ENCODE measurements at regions of chr2 and their contacts with region 1.

Region 1: GRCh38 chr2:207008105-207008990 is 69.0 kb downstream of the CPO start:
- DNase-seq: no peak
- ATAC-seq: no peak
- H3K4me3 ChIP-seq: no peak overlapping the region
- H3K27ac ChIP-seq: no peak overlapping the region
- H3K4me1 ChIP-seq: no peaks in the 10 kb centered on the region
- H3K27me3 ChIP-seq: no peaks in the 10 kb centered on the region
- CTCF ChIP-seq: peak; percentile 21; the same call in 1 of the 2 replicates

Region 2: GRCh38 chr2:207037896-207038295 is 29.5 kb after region 1 on chr2:
- CTCF ChIA-PET with region 1: interaction called, 13 read pairs
- POLR2A ChIA-PET with region 1: no interaction called
- in situ Hi-C with region 1: no loop called
- intact Hi-C with region 1: no loop called
- DNase-seq: no peak
- ATAC-seq: no peak
- H3K4me3 ChIP-seq: no peak overlapping the region
- H3K27ac ChIP-seq: no peak overlapping the region
- H3K4me1 ChIP-seq: no peaks in the 10 kb centered on the region
- H3K27me3 ChIP-seq: no peaks in the 10 kb centered on the region
- CTCF ChIP-seq: no peak

Measured in Panc1 (cell line).